ENCODE measurements at regions of chr5 and their contacts with region 1.

Region 1: DNA sequence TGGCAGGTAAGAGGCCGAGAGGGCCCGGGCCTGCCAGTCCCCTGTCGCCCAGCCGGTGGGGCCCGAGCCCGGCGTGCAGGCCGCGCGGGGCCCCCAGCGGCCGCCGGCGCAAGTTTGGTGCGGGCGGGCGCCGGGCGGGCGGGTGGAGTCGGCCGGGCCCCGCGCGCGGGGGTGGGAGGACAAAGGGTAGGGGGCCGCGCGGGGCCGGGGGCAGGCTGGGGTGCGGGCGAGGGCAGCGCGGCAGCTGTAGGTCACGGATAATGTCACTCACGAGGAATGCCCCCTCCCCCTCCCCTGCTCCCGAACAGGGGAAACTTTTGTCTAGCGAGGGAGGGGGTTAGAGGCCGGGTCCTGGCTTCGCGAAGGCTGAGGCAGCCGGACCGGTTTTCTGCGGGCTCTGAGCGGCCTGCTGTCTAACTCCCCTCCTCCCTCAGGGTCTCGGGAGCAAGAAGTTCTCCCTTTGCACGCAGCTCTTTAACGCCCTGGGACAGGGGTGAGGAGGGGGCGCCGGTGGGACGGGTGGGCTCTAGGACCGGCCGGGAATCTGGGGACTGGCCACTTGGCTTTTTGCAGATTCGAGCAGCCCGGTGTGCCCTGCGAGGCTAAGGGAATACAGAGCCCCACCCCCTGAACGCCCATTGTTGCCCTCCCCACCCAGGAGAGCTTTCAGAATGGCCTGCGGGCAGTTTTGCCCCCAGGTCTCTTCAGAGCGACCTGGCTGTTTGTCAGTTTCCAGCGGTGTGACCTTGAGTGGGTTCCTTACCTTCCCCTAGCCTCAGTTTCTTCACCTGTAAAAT is 21.3 kb upstream of the NDST1 start:
- DNase-seq: peak; percentile 69
- H3K4me3 ChIP-seq: peak overlapping the region; percentile 73
- H3K27ac ChIP-seq: peak overlapping the region; percentile 88
- H3K4me1 ChIP-seq: peaks cover 33% of the 10 kb centered on the region
- H3K27me3 ChIP-seq: no peaks in the 10 kb centered on the region
- CTCF ChIP-seq: no peak

Region 2: GRCh38 chr5:150523472-150524350 is 37.1 kb after region 1 on chr5:
- CTCF ChIA-PET with region 1: no interaction called
- POLR2A ChIA-PET with region 1: no interaction called
- intact Hi-C with region 1: loop called (anchors 5 kb)
- DNase-seq: peak; percentile 72
- H3K4me3 ChIP-seq: no peak overlapping the region
- H3K27ac ChIP-seq: no peak overlapping the region
- H3K4me1 ChIP-seq: no peaks in the 10 kb centered on the region
- H3K27me3 ChIP-seq: no peaks in the 10 kb centered on the region
- CTCF ChIP-seq: peak; percentile 67

Region 3: GRCh38 chr5:151141535-151141934 is 654.9 kb after region 1 on chr5:
- CTCF ChIA-PET with region 1: no interaction called
- POLR2A ChIA-PET with region 1: interaction called, 15 read pairs
- intact Hi-C with region 1: no loop called
- DNase-seq: no peak
- H3K4me3 ChIP-seq: no peak overlapping the region
- H3K27ac ChIP-seq: no peak overlapping the region
- H3K4me1 ChIP-seq: no peaks in the 10 kb centered on the region
- H3K27me3 ChIP-seq: no peaks in the 10 kb centered on the region
- CTCF ChIP-seq: no peak

Measured in A673 (cell line).